Panc1 (cell line): ENCODE measurements at regions of chr19 and their contacts with region 1.

Region 1: DNA sequence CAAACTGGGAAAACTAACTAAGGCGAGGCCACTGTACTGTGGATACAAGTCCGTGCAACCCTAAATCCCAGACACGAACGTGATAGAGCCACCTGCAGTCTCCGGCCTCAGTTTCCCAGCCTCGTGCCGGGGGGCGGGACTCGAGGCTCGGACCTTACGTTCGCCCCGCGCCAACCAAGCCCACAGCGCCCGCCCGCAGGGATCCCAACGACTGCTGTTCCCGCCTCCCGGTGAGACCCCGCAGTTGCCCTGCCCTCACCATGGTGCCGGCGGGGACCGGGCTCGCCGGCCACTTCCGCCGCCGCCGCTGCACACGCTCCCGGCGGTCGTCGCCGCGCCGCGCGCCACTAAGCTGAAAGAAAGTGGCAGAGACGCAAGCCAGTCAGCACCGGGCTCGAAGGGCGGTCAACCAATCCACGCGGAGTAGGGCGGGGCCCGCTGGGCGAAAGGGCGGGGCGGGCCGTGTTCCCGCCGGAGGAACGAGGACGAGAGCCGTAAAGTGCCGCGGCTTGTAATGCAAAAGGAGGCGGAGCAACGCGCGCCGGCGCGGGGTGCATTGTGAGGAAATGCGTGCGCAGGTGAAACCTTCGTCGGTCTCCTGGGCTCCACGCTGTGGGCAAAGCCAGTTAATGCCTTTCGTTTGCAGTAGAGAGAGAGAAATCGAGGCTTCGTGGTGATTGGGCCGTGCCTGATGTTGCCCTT is at the start of gene LSM4:
- DNase-seq: peak; percentile 84
- ATAC-seq: peak; percentile 99
- H3K4me3 ChIP-seq: peak within 1 kb of the TSS; percentile 86 to 92
- H3K27ac ChIP-seq: peak within 1 kb of the TSS; percentile 98
- H3K4me1 ChIP-seq: peaks cover 25% of the 10 kb centered on the region
- H3K27me3 ChIP-seq: no peaks in the 10 kb centered on the region
- CTCF ChIP-seq: no peak
- total RNA-seq, gene LSM4: 209 TPM

Region 2: DNA sequence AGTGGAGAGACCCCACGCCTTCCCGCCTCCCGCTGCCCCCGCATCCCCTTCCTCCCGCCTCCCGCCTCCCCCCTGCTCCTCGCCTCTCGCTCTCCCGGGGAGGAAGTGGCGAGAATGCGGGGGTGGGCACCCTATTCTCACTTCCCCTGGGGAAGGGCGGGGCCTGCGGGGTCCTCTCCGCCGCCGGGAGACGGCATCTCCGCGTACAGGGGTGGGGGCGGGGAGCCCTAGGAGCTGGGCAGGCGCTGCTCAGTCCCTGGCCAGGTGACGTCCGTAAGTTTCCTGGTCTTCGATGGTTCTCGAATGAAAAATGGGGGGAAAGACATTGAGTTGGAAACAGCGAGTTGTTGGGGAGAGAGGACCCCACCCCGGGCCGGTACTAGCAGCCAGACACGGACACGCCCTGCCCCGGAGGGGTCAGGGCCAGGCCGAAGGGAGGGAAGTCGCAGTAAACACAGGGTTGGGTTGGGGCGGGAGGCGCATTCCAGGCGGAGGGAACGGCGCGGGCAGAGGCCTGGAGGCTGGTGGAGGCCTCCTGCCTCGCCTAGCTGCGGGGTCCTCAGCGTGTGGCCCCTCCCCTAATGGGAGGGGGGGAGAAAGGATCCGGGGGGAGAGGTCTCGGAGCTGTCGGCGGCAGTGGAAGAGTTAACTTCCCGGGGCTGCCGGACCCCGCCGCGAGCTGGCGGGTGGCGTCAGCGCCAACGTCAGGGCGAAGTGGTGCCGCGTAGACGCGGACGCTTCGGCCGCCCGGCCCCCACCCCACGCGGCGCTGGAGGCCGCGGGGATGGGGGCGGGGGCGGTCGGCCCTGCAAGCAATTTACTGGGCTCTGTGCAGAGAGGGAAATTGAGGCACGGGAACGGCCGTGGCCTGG is 31.1 kb before region 1 on chr19:
- CTCF ChIA-PET with region 1: no interaction called
- POLR2A ChIA-PET with region 1: no interaction called
- in situ Hi-C with region 1: no loop called
- intact Hi-C with region 1: loop called (anchors 1 kb)
- DNase-seq: no peak
- ATAC-seq: peak; percentile 86
- H3K4me3 ChIP-seq: peak overlapping the region; percentile 43 to 68
- H3K27ac ChIP-seq: peak overlapping the region; percentile 90
- H3K4me1 ChIP-seq: peaks cover 23% of the 10 kb centered on the region
- H3K27me3 ChIP-seq: no peaks in the 10 kb centered on the region
- CTCF ChIP-seq: no peak

Region 3: DNA sequence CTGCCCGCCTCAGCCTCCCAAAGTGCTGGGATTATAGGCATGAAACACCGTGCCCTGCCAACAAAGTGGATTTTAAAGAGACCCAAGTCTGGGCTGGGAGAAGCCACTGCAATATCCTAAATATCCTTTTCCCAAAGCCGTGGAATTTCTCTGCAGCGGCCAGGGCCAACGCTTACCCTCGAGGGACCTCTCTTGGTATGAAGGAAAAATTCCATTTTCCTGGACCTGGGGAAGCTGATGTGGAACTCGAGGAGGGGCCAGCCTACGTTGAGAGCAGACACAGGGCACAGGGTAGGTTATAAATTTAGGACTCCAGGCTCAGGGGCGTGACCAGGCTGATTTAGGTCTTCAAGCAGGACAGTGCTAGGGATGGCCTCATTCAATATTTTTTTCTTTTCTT is 491.2 kb after region 1 on chr19:
- CTCF ChIA-PET with region 1: no interaction called
- POLR2A ChIA-PET with region 1: no interaction called
- in situ Hi-C with region 1: no loop called
- intact Hi-C with region 1: no loop called
- DNase-seq: no peak
- ATAC-seq: no peak
- H3K4me3 ChIP-seq: no peak overlapping the region
- H3K27ac ChIP-seq: no peak overlapping the region
- H3K4me1 ChIP-seq: no peaks in the 10 kb centered on the region
- H3K27me3 ChIP-seq: no peaks in the 10 kb centered on the region
- CTCF ChIP-seq: no peak